Endothelial cell of umbilical vein (primary cell): ENCODE measurements at regions of chr3 and their contacts with region 1.

Region 1: GRCh38 chr3:112390783-112391641 is 58.1 kb downstream of the CD200 start:
- DNase-seq: peak; percentile 89
- H3K4me3 ChIP-seq: no peak overlapping the region
- H3K27ac ChIP-seq: peak overlapping the region; percentile 98
- H3K4me1 ChIP-seq: peaks cover 44% of the 10 kb centered on the region
- H3K27me3 ChIP-seq: no peaks in the 10 kb centered on the region
- CTCF ChIP-seq: no peak
- POLR2A ChIP-seq: peak; percentile 68

Region 2: DNA sequence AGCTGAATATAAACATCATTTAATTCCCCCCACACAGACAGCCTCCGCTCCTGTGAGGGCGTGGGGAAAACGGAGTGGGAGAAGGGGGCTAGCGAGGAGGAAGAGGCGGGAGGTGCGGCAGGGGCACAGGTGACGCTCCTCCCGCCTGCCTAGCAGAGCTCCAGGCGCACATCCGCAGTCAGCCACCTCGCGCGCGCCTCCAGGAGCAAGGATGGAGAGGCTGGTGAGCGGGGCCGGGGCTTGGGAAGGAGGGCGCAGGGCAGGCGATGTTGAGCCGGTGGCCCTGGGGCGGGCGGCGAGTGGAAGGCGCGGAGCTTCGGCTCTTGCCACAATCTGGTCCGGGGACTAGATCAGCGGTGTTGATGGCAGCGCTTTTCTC is 58.0 kb before region 1 on chr3 and contains the start of gene CD200:
- CTCF ChIA-PET with region 1: interaction called, 10 read pairs
- POLR2A ChIA-PET with region 1: interaction called, 8 read pairs
- dilution Hi-C with region 1: no loop called
- intact Hi-C with region 1: loop called (anchors 1 kb)
- DNase-seq: peak; percentile 62
- H3K4me3 ChIP-seq: peak within 1 kb of the TSS; percentile 28 to 59 (median 56)
- H3K27ac ChIP-seq: no peak within 1 kb of the TSS
- H3K4me1 ChIP-seq: peaks cover 8% of the 10 kb centered on the region
- H3K27me3 ChIP-seq: peaks cover 0 to 6% of the 10 kb centered on the region in 2 experiments
- CTCF ChIP-seq: no peak
- POLR2A ChIP-seq: no peak
- total RNA-seq, gene CD200: 7.2 and 8.2 TPM in 2 replicates

Region 3: DNA sequence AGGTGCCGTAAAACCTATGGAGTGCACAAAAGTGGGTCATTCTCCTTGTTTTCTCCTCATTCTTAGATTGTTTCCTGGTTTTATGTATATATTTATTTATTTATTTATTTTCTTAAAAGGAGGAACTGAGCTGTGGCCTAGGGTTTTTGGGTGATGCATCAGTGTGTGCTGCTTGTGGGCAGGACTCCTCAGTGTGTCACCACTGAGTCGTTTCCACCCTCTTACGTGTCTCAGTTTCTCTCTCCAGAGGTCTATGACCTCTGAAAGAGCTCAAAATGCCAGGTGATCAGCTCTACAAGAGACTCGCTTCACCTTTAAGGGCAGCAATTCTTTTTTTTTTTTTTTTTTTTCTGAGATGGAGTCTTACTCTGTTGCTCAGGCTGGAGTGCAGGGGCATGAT is 14.8 kb after region 1 on chr3:
- CTCF ChIA-PET with region 1: interaction called, 11 read pairs
- POLR2A ChIA-PET with region 1: no interaction called
- dilution Hi-C with region 1: no loop called
- intact Hi-C with region 1: no loop called
- DNase-seq: no peak
- H3K4me3 ChIP-seq: no peak overlapping the region
- H3K27ac ChIP-seq: no peak overlapping the region
- H3K4me1 ChIP-seq: no peaks in the 10 kb centered on the region
- H3K27me3 ChIP-seq: no peaks in the 10 kb centered on the region
- CTCF ChIP-seq: no peak
- POLR2A ChIP-seq: no peak

Region 4: DNA sequence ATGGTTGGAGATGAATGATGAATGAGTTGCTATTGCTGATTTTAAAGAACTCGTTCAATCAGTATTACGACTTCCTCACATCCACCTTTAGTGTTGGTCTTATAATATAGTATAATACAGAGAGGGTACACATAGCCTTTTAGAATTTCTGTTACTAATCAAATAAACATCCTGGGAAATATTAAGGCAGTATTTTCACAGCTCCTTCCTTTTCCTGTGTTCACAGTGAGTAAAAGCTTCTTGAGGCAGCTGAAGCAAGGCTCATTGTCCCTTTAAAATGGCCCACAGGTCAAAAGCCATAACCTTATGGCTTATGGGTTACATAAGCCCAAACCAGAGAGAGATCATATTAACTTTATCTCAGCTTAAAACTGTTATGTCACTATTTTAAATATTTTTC is 109.6 kb after region 1 on chr3:
- CTCF ChIA-PET with region 1: interaction called, 7 read pairs
- POLR2A ChIA-PET with region 1: no interaction called
- dilution Hi-C with region 1: no loop called
- intact Hi-C with region 1: loop called (anchors 1 kb)
- DNase-seq: peak; percentile 93
- H3K4me3 ChIP-seq: no peak overlapping the region
- H3K27ac ChIP-seq: peak overlapping the region; percentile 64
- H3K4me1 ChIP-seq: peaks cover 18% of the 10 kb centered on the region
- H3K27me3 ChIP-seq: no peaks in the 10 kb centered on the region
- CTCF ChIP-seq: no peak
- POLR2A ChIP-seq: peak; percentile 76

Region 5: GRCh38 chr3:112605285-112605684 is 214.3 kb after region 1 on chr3:
- CTCF ChIA-PET with region 1: no interaction called
- POLR2A ChIA-PET with region 1: no interaction called
- dilution Hi-C with region 1: no loop called
- intact Hi-C with region 1: loop called (anchors 1 kb)
- DNase-seq: peak; percentile 98
- H3K4me3 ChIP-seq: peak overlapping the region in 1 of 3 experiments; percentile 38
- H3K27ac ChIP-seq: peak overlapping the region; percentile 94
- H3K4me1 ChIP-seq: peaks cover 17% of the 10 kb centered on the region
- H3K27me3 ChIP-seq: no peaks in the 10 kb centered on the region
- CTCF ChIP-seq: no peak
- POLR2A ChIP-seq: no peak